ENCODE measurements at regions of chr7 and their contacts with region 1.

Region 1: GRCh38 chr7:64887756-64888508 is 15.1 kb upstream of the ZNF273 start:
- DNase-seq: peak; percentile 66
- H3K4me3 Mint-ChIP-seq: peak overlapping the region; percentile 77
- H3K27ac Mint-ChIP-seq: no peak overlapping the region
- H3K4me1 Mint-ChIP-seq: peaks cover 15% of the 10 kb centered on the region
- H3K27me3 Mint-ChIP-seq: peaks cover 62% of the 10 kb centered on the region

Region 2: GRCh38 chr7:64636386-64636785 is 251.5 kb before region 1 on chr7:
- CTCF ChIA-PET with region 1: no interaction called
- intact Hi-C with region 1: loop called (anchors 2 kb)
- DNase-seq: peak; percentile 31
- H3K4me3 Mint-ChIP-seq: no peak overlapping the region
- H3K27ac Mint-ChIP-seq: no peak overlapping the region
- H3K4me1 Mint-ChIP-seq: no peaks in the 10 kb centered on the region
- H3K27me3 Mint-ChIP-seq: no peaks in the 10 kb centered on the region

Measured in activated naive CD4-positive, alpha-beta T cell treated with anti-CD3 and anti-CD28 coated beads for 36 hours (primary cell).